ENCODE measurements at regions of chr14 and their contacts with region 1.

Region 1: GRCh38 chr14:22872033-22872832 is 693 bp downstream of the LRP10 start:
- DNase-seq: peak; percentile 82

Region 2: DNA sequence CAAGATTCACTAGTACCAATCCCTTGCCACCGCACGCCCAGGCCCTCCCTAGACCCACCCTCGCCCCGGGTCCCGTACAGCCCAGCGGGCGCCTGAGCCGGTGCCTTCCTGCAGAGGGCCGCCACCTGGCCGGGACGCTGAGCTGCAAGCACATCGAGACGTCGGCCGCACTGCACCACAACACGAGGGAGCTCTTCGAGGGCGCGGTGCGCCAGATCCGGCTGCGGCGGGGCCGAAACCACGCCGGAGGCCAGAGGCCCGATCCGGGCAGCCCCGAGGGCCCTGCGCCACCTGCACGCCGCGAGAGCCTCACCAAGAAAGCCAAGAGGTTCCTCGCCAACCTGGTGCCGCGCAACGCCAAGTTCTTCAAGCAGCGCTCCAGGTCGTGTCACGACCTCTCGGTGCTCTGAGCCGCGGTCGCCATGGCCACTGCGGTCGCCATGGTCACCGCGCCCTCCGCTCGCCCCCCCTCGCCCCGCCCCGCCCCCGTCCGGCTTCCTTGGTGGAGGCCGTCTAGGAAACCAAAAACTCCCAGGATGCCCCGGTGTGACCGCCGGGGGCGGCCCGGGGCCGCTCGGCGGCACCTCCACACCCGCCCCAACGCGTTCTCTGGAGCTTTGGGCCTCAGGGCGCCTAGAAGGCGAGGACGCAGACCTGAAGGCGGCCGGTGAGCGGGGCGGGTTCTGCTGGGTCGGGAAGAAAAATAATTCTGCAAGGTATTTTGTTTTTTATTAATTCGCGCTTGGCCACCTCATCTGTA is 14.4 kb after region 1 on chr14:
- CTCF ChIA-PET with region 1: interaction called, 30 read pairs
- POLR2A ChIA-PET with region 1: interaction called, 37 read pairs
- DNase-seq: peak; percentile 75

Region 3: DNA sequence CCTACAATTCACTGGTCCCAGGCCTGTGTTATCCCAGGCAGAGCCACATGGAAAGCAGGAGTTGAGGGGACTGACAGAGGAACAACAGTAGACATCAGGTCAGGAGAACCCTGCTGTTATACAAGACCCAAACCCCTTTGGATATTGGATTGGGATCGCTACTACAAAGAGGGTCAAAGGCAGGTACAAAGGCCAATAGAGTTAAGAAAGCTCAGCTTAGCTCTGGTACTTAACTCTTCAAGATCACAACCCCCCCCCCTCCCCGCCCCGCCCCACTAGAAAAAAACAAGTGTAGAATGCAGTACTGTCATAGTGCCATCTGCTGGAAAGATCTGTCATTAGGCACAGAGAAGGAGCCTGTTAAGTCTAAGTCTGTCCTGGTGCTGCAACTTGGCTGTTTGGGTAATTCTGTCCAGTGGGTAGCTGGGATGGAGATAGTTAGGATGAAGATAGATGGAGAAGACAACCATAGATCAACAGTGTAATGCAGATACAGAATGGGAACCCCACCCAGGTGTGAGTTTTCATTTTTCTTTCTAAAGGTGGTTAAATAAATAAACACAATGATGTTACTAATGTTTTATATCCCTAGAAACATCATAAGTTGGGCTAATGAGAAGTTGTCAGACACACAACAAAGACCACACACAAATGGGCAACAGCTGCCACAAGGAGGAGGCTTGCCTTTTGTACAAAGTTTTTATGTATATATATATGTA is 28.0 kb after region 1 on chr14:
- CTCF ChIA-PET with region 1: interaction called, 19 read pairs
- POLR2A ChIA-PET with region 1: interaction called, 5 read pairs
- DNase-seq: peak; percentile 65

Region 4: DNA sequence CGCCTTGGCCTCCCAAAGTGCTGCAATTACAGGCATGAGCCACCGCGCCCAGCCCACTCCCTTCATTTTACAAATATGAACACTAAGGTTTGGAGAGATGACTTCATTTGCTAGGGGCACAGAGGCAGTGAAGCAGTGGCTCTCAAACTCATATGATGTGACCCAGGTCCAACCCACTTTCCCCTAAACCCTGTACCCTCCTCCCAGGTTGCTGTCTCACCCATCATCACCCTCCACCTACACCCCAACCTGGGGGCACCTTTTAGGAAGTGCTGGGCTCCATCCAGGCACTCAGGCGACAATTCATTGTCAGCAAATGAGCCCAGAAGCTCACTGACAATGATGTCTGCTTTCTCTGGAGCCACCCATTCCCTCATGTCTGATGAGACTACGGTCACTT is 51.5 kb after region 1 on chr14:
- CTCF ChIA-PET with region 1: no interaction called
- POLR2A ChIA-PET with region 1: no interaction called
- DNase-seq: no peak